Mammary epithelial cell (primary cell): ENCODE measurements at regions of chr6 and their contacts with region 1.

Region 1: GRCh38 chr6:36423101-36423824 is 19.4 kb downstream of the PXT1 start:
- DNase-seq: peak; percentile 98
- H3K4me3 ChIP-seq: peak overlapping the region; percentile 53 to 62 (median 55)
- H3K27ac ChIP-seq: peak overlapping the region; percentile 77
- H3K4me1 ChIP-seq: peaks cover 39% of the 10 kb centered on the region
- H3K27me3 ChIP-seq: no peaks in the 10 kb centered on the region
- CTCF ChIP-seq: peak; percentile 44 to 78

Region 2: GRCh38 chr6:35139908-35140655 is 1283.2 kb before region 1 on chr6:
- CTCF ChIA-PET with region 1: no interaction called
- dilution Hi-C with region 1: no loop called
- in situ Hi-C with region 1: no loop called
- intact Hi-C with region 1: no loop called
- DNase-seq: peak; percentile 36
- H3K4me3 ChIP-seq: no peak overlapping the region
- H3K27ac ChIP-seq: no peak overlapping the region
- H3K4me1 ChIP-seq: no peaks in the 10 kb centered on the region
- H3K27me3 ChIP-seq: no peaks in the 10 kb centered on the region
- CTCF ChIP-seq: peak; percentile 87 to 89

Region 3: DNA sequence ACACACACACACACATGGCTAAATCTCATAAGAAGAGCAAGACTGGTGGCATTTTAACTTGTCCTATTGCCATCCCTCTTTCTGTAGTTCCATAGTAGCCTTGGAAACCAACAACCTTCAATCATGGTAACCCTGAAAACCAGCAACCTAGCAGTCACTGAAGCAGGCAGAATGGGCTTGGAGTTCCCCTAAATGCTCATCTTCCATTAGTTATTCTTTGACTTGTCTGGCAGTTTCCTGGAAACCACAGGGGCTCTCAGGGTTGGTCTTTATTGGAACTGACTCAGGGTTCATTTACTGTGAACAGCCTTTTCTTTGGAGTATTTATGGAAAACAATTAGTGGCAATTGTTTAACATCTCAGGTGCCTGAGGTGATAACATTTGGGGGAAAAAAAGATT is 246.1 kb before region 1 on chr6:
- CTCF ChIA-PET with region 1: no interaction called
- dilution Hi-C with region 1: no loop called
- in situ Hi-C with region 1: no loop called
- intact Hi-C with region 1: no loop called
- DNase-seq: peak; percentile 12
- H3K4me3 ChIP-seq: no peak overlapping the region
- H3K27ac ChIP-seq: no peak overlapping the region
- H3K4me1 ChIP-seq: no peaks in the 10 kb centered on the region
- H3K27me3 ChIP-seq: no peaks in the 10 kb centered on the region
- CTCF ChIP-seq: no peak

Region 4: GRCh38 chr6:36302227-36302976 is 120.9 kb before region 1 on chr6:
- CTCF ChIA-PET with region 1: no interaction called
- dilution Hi-C with region 1: no loop called
- in situ Hi-C with region 1: no loop called
- intact Hi-C with region 1: no loop called
- DNase-seq: peak; percentile 78
- H3K4me3 ChIP-seq: no peak overlapping the region
- H3K27ac ChIP-seq: no peak overlapping the region
- H3K4me1 ChIP-seq: no peaks in the 10 kb centered on the region
- H3K27me3 ChIP-seq: no peaks in the 10 kb centered on the region
- CTCF ChIP-seq: peak; percentile 98 to 99

Region 5: GRCh38 chr6:36386495-36387439 is 36.5 kb before region 1 on chr6:
- CTCF ChIA-PET with region 1: no interaction called
- dilution Hi-C with region 1: no loop called
- in situ Hi-C with region 1: no loop called
- intact Hi-C with region 1: loop called (anchors 2 kb)
- DNase-seq: peak; percentile 68
- H3K4me3 ChIP-seq: peak overlapping the region; percentile 40 to 60 (median 54)
- H3K27ac ChIP-seq: no peak overlapping the region
- H3K4me1 ChIP-seq: peaks cover 11% of the 10 kb centered on the region
- H3K27me3 ChIP-seq: no peaks in the 10 kb centered on the region
- CTCF ChIP-seq: peak in 1 of 2 donors; percentile 9

Region 6: GRCh38 chr6:36514554-36515456 is 91.5 kb after region 1 on chr6:
- CTCF ChIA-PET with region 1: no interaction called
- dilution Hi-C with region 1: no loop called
- in situ Hi-C with region 1: no loop called
- intact Hi-C with region 1: no loop called
- DNase-seq: peak; percentile 57
- H3K4me3 ChIP-seq: no peak overlapping the region
- H3K27ac ChIP-seq: no peak overlapping the region
- H3K4me1 ChIP-seq: peaks cover 14% of the 10 kb centered on the region
- H3K27me3 ChIP-seq: no peaks in the 10 kb centered on the region
- CTCF ChIP-seq: no peak

Region 7: GRCh38 chr6:36546920-36547645 is 123.8 kb after region 1 on chr6 and contains the start of gene STK38:
- CTCF ChIA-PET with region 1: no interaction called
- dilution Hi-C with region 1: no loop called
- in situ Hi-C with region 1: no loop called
- intact Hi-C with region 1: loop called (anchors 1 kb)
- DNase-seq: peak; percentile 81
- H3K4me3 ChIP-seq: peak within 1 kb of the TSS; percentile 96 to 100 (median 99)
- H3K27ac ChIP-seq: peak within 1 kb of the TSS; percentile 80
- H3K4me1 ChIP-seq: peaks cover 3% of the 10 kb centered on the region
- H3K27me3 ChIP-seq: no peaks in the 10 kb centered on the region
- CTCF ChIP-seq: peak in 1 of 2 donors; percentile 36
- total RNA-seq, gene STK38: 23.2 to 29.0 TPM

Region 8: DNA sequence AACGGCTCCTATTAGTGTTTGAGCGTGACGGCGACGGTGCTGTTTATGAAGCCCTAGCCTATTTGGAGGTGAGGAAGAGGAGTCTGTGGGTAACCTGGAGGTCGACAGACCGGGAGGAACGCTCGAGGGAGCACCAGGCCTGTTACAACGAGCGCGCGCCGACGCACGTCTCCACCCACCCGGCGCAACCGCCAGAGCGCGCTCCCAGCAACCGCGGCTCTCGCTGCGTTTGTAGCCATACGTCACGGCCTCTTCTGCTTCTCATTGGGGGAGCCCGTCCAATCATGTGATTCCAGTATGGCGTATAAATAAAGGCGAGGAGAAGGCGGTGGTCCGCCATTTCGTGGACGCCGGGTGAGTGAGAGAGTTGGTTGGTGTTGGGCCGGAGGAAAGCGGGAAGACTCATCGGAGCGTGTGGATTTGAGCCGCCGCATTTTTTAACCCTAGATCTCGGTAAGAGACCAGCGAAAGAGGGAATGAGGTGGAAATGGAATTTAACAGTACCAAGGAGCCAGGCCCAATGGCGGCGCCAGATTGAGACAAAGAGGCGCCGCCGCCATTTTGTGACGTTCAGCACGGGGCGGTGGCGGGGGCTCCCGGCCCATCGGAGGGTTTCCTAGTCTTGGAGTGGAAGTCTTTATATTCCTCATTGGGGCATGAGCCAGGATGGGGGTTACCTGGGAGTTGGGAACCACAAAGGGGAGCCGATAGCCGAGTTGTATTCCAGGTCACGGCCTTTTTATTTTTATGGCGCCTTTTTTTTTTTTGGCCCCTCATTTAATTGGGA is 171.0 kb after region 1 on chr6 and contains the start of gene SRSF3:
- CTCF ChIA-PET with region 1: no interaction called
- dilution Hi-C with region 1: no loop called
- in situ Hi-C with region 1: no loop called
- intact Hi-C with region 1: loop called (anchors 1 kb)
- DNase-seq: peak; percentile 97
- H3K4me3 ChIP-seq: peak within 1 kb of the TSS; percentile 68 to 99 (median 92)
- H3K27ac ChIP-seq: peak within 1 kb of the TSS; percentile 97
- H3K4me1 ChIP-seq: peaks cover 35% of the 10 kb centered on the region
- H3K27me3 ChIP-seq: no peaks in the 10 kb centered on the region
- CTCF ChIP-seq: peak in 1 of 2 donors; percentile 57
- total RNA-seq, gene SRSF3: 167 to 323 TPM

Region 9: GRCh38 chr6:36724514-36725390 is 301.5 kb after region 1 on chr6:
- CTCF ChIA-PET with region 1: no interaction called
- dilution Hi-C with region 1: no loop called
- in situ Hi-C with region 1: no loop called
- intact Hi-C with region 1: loop called (anchors 1 kb)
- DNase-seq: peak; percentile 63
- H3K4me3 ChIP-seq: no peak overlapping the region
- H3K27ac ChIP-seq: no peak overlapping the region
- H3K4me1 ChIP-seq: peaks cover 18% of the 10 kb centered on the region
- H3K27me3 ChIP-seq: no peaks in the 10 kb centered on the region
- CTCF ChIP-seq: peak; percentile 78 to 80